ENCODE measurements at regions of chr5 and their contacts with region 1.

Region 1: GRCh38 chr5:68215208-68215897 is at the start of gene PIK3R1:
- DNase-seq: peak; percentile 97
- H3K4me3 Mint-ChIP-seq: peak within 1 kb of the TSS; percentile 89
- H3K27ac Mint-ChIP-seq: peak within 1 kb of the TSS; percentile 95
- H3K4me1 Mint-ChIP-seq: peaks cover 34% of the 10 kb centered on the region
- H3K27me3 Mint-ChIP-seq: no peaks in the 10 kb centered on the region
- total RNA-seq, gene PIK3R1: 35.2 and 38.6 TPM in 2 replicates

Region 2: DNA sequence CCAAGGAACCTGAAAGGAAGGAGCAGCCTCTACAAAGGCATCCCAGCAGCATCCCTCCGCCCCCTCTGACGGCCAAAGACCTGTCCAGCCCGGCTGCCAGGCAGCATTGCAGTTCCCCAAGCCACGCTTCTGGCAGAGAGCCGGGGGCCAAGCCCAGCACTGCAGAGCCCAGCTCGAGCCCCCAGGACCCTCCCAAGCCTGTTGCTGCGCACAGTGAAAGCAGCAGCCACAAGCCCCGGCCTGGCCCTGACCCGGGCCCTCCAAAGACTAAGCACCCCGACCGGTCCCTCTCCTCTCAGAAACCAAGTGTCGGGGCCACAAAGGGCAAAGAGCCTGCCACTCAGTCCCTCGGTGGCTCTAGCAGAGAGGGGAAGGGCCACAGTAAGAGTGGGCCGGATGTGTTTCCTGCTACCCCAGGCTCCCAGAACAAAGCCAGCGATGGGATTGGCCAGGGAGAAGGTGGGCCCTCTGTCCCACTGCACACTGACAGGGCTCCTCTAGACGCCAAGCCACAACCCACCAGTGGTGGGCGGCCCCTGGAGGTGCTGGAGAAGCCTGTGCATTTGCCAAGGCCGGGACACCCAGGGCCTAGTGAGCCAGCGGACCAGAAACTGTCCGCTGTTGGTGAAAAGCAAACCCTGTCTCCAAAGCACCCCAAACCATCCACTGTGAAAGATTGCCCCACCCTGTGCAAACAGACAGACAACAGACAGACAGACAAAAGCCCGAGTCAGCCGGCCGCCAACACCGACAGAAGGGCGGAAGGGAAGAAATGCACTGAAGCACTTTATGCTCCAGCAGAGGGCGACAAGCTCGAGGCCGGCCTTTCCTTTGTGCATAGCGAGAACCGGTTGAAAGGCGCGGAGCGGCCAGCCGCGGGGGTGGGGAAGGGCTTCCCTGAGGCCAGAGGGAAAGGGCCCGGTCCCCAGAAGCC is 1049.6 kb before region 1 on chr5:
- intact Hi-C with region 1: loop called (anchors 2 kb)
- DNase-seq: peak; percentile 96
- H3K4me3 Mint-ChIP-seq: peak overlapping the region; percentile 89
- H3K27ac Mint-ChIP-seq: peak overlapping the region; percentile 96
- H3K4me1 Mint-ChIP-seq: peaks cover 65% of the 10 kb centered on the region
- H3K27me3 Mint-ChIP-seq: no peaks in the 10 kb centered on the region

Region 3: GRCh38 chr5:68252673-68253623 is 37.6 kb after region 1 on chr5:
- intact Hi-C with region 1: loop called (anchors 1 kb)
- DNase-seq: peak; percentile 81
- H3K4me3 Mint-ChIP-seq: no peak overlapping the region
- H3K27ac Mint-ChIP-seq: no peak overlapping the region
- H3K4me1 Mint-ChIP-seq: peaks cover 61% of the 10 kb centered on the region
- H3K27me3 Mint-ChIP-seq: no peaks in the 10 kb centered on the region

Region 4: GRCh38 chr5:68369023-68369359 is 153.6 kb after region 1 on chr5:
- intact Hi-C with region 1: no loop called
- DNase-seq: no peak
- H3K4me3 Mint-ChIP-seq: peak overlapping the region; percentile 59
- H3K27ac Mint-ChIP-seq: peak overlapping the region; percentile 80
- H3K4me1 Mint-ChIP-seq: peaks cover 40% of the 10 kb centered on the region
- H3K27me3 Mint-ChIP-seq: no peaks in the 10 kb centered on the region

Region 5: GRCh38 chr5:68379275-68380036 is 164.1 kb after region 1 on chr5:
- intact Hi-C with region 1: loop called (anchors 10 kb)
- DNase-seq: no peak
- H3K4me3 Mint-ChIP-seq: no peak overlapping the region
- H3K27ac Mint-ChIP-seq: peak overlapping the region; percentile 70
- H3K4me1 Mint-ChIP-seq: peaks cover 66% of the 10 kb centered on the region
- H3K27me3 Mint-ChIP-seq: peaks cover 6% of the 10 kb centered on the region

Region 6: DNA sequence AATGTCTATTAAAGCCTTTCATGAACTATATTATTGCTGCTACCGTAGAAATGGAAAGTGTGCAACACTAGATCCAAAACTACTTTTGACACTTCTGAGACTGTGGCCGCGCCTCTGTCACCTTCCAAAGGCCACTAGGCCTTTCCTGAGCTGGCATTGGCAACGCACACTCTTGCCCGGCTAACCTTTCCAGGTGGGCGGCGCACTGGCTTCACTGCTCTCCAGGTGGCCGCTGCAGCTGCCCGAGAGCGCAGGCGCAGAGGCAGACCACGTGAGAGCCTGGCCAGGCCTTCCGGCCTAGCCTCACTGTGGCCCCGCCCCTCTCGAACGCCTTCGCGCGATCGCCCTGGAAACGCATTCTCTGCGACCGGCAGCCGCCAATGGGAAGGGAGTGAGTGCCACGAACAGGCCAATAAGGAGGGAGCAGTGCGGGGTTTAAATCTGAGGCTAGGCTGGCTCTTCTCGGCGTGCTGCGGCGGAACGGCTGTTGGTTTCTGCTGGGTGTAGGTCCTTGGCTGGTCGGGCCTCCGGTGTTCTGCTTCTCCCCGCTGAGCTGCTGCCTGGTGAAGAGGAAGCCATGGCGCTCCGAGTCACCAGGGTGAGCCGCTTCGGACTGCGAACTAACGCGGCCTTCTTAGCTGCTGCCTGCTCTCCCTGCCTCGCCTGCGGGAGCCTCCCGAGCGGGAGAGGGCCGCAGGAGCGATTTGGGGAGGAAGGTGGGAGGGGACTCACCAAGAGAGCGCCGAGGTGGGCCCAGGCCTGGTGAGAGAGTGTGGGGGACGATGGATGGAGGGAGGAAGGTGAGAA is 951.5 kb after region 1 on chr5 and contains the start of gene CCNB1:
- intact Hi-C with region 1: loop called (anchors 5 kb)
- DNase-seq: peak; percentile 100
- H3K4me3 Mint-ChIP-seq: peak within 1 kb of the TSS; percentile 98
- H3K27ac Mint-ChIP-seq: peak within 1 kb of the TSS; percentile 95
- H3K4me1 Mint-ChIP-seq: peaks cover 33% of the 10 kb centered on the region
- H3K27me3 Mint-ChIP-seq: peaks cover 2% of the 10 kb centered on the region
- total RNA-seq, gene CCNB1: 117 and 122 TPM in 2 replicates

Measured in activated CD4-positive, alpha-beta T cell treated with anti-CD3 and anti-CD28 coated beads, Interleukin-2, amount 10 ng/mL, durations not matched to agents 24 days and 14 days (primary cell).